Mammary epithelial cell (primary cell): ENCODE measurements at regions of chr3 and their contacts with region 1.

Region 1: DNA sequence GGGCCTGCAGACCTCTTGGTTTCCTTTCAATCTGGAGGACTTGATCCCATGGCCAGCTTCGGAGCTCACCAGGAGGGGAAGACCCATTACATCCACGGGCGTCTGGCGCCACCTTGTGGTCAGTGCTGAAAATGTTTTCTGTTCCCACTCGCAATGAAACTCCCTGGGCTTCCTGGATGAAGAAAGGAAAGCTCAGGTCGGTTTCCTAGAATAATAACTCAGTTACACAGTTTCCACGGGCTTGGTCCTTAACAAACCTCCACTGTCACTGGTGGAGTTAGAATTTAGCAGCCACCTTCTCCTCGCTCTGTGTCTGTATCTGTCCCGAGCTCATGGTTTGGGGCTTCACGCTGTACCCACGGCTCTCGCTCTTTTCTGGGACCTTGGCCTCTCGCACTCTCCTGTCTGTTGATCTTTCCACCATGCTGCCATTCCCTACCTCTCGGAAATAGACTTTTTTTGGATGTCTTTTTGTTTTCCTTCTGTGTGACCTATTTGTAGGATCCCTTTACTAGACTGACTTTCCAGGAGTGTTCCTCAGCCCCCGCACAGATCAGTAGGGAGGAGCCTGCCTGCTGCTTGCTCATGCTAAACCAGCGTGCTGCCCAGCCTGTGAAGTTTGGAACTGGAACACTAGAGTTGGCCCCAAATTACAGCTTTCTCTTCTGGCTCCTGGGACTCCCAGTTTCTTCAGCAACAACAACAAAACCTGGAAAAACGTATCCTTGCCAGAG is 56.3 kb downstream of the IL20RB start:
- DNase-seq: peak; percentile 75
- H3K4me3 ChIP-seq: peak overlapping the region; percentile 26 to 54 (median 31)
- H3K27ac ChIP-seq: peak overlapping the region; percentile 74
- H3K4me1 ChIP-seq: peaks cover 17% of the 10 kb centered on the region
- H3K27me3 ChIP-seq: no peaks in the 10 kb centered on the region
- CTCF ChIP-seq: peak; percentile 69 to 82

Region 2: DNA sequence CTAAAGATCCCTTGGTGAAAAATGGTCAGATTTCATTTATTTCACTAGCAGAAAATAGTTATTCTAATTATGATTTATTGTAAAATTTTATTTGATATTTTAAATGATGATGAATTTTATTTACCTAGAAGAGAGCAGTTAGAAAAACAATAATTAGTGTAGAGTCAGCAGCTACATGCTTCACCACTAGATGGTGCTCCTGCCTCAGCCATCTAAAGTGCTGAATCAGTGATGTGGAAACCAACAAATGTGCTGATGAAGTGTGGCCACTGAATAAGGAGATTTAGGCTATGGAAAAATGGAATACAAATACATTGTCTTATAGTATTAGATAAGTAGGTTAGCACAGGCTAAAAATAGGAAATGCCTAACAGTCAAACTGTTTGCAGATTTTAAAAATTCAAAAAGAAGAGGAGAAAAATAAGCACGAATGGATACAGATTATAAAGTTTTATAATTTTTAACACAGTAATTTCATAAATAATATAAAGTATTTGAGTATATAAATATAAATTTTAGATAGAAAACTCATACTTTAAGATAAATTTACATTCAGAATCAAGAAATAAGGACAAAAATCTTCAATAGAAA is 938.8 kb before region 1 on chr3:
- CTCF ChIA-PET with region 1: no interaction called
- dilution Hi-C with region 1: no loop called
- in situ Hi-C with region 1: loop called (anchors 5 to 25 kb)
- intact Hi-C with region 1: loop called (anchors 1 kb)
- DNase-seq: peak; percentile 53
- H3K4me3 ChIP-seq: no peak overlapping the region
- H3K27ac ChIP-seq: no peak overlapping the region
- H3K4me1 ChIP-seq: peaks cover 16% of the 10 kb centered on the region
- H3K27me3 ChIP-seq: no peaks in the 10 kb centered on the region
- CTCF ChIP-seq: peak; percentile 90 to 96

Region 3: DNA sequence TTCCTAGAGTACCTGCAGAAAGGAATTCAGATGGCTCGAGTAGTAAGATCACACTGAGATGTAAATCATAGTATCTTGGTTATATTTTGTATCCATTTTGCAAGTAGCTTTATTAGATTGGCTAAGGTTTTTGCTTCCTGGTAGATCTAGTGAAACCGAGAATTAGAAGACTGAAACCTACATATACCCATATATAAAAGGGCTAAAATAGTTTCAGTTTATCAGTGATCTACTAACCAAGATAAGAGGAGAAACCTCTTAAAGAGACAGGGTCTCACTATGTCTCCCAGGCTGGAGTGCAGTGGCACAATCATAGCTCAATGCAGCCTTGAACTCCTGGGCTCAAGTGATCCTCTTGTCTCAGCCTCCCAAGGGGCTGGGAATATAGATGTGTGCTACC is 628.7 kb before region 1 on chr3:
- CTCF ChIA-PET with region 1: no interaction called
- dilution Hi-C with region 1: no loop called
- in situ Hi-C with region 1: loop called (anchors 25 kb)
- intact Hi-C with region 1: no loop called
- DNase-seq: no peak
- H3K4me3 ChIP-seq: no peak overlapping the region
- H3K27ac ChIP-seq: no peak overlapping the region
- H3K4me1 ChIP-seq: no peaks in the 10 kb centered on the region
- H3K27me3 ChIP-seq: no peaks in the 10 kb centered on the region
- CTCF ChIP-seq: no peak

Region 4: GRCh38 chr3:136545664-136546268 is 468.4 kb before region 1 on chr3:
- CTCF ChIA-PET with region 1: no interaction called
- dilution Hi-C with region 1: no loop called
- in situ Hi-C with region 1: no loop called
- intact Hi-C with region 1: loop called (anchors 2 kb)
- DNase-seq: no peak
- H3K4me3 ChIP-seq: no peak overlapping the region
- H3K27ac ChIP-seq: no peak overlapping the region
- H3K4me1 ChIP-seq: peaks cover 6% of the 10 kb centered on the region
- H3K27me3 ChIP-seq: no peaks in the 10 kb centered on the region
- CTCF ChIP-seq: peak in 1 of 2 donors; percentile 37

Region 5: DNA sequence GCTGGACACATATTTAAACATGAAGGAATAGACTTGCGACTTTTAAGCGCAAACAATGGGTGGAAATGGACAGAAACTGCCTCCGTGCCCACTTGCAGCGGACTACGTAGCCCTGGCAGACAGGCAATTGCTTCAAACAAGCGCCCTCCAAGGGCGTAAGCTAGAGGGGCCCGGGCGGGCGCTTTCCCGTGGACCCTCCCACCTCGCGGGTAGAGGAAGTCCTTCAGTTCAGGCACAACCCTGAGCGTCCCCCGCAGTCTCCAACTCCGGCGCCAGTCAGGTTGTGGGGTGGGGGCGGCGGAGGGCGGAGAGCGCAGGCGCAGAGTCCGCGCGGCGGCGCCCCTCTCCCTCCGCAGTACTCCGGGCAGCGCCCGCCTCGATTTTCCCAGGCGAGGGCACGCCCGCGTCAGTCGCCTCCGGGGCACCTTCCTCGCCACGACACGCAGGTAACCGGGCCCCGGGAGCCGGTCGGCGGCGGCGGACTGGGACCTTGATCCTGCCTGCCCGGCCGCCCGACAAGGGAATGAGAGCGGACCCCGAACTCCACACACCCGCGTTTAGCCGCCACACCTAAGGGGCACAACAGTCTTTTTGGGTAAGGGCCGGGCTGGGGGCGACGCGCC is 195.2 kb before region 1 on chr3 and contains the start of gene SLC35G2:
- CTCF ChIA-PET with region 1: no interaction called
- dilution Hi-C with region 1: no loop called
- in situ Hi-C with region 1: no loop called
- intact Hi-C with region 1: loop called (anchors 2 kb)
- DNase-seq: no peak
- H3K4me3 ChIP-seq: peak within 1 kb of the TSS; percentile 48 to 59 (median 58)
- H3K27ac ChIP-seq: peak within 1 kb of the TSS; percentile 36
- H3K4me1 ChIP-seq: peaks cover 19% of the 10 kb centered on the region
- H3K27me3 ChIP-seq: no peaks in the 10 kb centered on the region
- CTCF ChIP-seq: no peak
- total RNA-seq, gene SLC35G2: 3.9 to 6.0 TPM

Region 6: GRCh38 chr3:136949708-136950107 is 64.4 kb before region 1 on chr3:
- CTCF ChIA-PET with region 1: interaction called, 4 read pairs
- dilution Hi-C with region 1: no loop called
- in situ Hi-C with region 1: no loop called
- intact Hi-C with region 1: loop called (anchors 1 kb)
- DNase-seq: no peak
- H3K4me3 ChIP-seq: no peak overlapping the region
- H3K27ac ChIP-seq: no peak overlapping the region
- H3K4me1 ChIP-seq: peaks cover 27% of the 10 kb centered on the region
- H3K27me3 ChIP-seq: no peaks in the 10 kb centered on the region
- CTCF ChIP-seq: peak; percentile 17 to 47

Region 7: GRCh38 chr3:137050281-137050680 is 36.2 kb after region 1 on chr3:
- CTCF ChIA-PET with region 1: no interaction called
- dilution Hi-C with region 1: no loop called
- in situ Hi-C with region 1: no loop called
- intact Hi-C with region 1: no loop called
- DNase-seq: no peak
- H3K4me3 ChIP-seq: no peak overlapping the region
- H3K27ac ChIP-seq: no peak overlapping the region
- H3K4me1 ChIP-seq: no peaks in the 10 kb centered on the region
- H3K27me3 ChIP-seq: no peaks in the 10 kb centered on the region
- CTCF ChIP-seq: no peak